ENCODE measurements at regions of chr3 and their contacts with region 1.

Region 1: DNA sequence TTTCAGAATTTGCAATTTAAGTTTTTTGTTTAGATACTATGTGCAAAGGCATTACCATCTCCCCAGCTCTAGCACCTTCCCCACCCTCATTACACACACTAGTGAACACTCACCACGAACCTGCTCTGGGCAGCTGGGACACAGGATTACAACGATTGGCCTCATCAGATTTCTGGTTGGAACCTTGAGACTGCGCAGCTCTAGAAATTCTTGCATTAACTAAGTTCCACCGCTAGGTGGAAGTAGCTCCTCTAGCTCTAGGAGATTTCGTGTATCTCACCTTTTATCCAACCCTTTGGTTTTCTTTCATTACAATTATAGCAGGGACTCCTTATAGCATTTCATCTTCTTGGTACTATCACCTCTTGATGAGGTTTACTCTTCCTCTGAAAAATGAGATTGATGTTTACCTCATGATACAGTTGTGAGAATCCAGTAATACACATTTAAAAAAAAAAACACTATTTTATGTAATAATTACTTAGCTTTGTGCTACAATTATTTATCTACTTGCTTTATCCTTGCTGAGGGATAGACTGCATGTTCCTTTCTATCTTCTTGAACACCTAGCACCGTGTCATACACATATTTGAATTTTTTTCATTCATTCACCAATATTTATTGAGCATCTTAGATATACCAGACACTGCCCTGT is 28.7 kb upstream of the PLOD2 start:
- DNase-seq: peak; percentile 47
- ATAC-seq: peak; percentile 93
- H3K4me3 ChIP-seq: no peak overlapping the region
- H3K27ac ChIP-seq: no peak overlapping the region
- H3K4me1 ChIP-seq: peaks cover 0 to 6% of the 10 kb centered on the region in 2 experiments; a peak in 2 of 4 replicates
- H3K27me3 ChIP-seq: no peaks in the 10 kb centered on the region
- CTCF ChIP-seq: peak; percentile 62 to 73 (median 65); a peak in 5 of 6 replicates
- POLR2A ChIP-seq: no peak
- RAD21 ChIP-seq: peak; percentile 78

Region 2: DNA sequence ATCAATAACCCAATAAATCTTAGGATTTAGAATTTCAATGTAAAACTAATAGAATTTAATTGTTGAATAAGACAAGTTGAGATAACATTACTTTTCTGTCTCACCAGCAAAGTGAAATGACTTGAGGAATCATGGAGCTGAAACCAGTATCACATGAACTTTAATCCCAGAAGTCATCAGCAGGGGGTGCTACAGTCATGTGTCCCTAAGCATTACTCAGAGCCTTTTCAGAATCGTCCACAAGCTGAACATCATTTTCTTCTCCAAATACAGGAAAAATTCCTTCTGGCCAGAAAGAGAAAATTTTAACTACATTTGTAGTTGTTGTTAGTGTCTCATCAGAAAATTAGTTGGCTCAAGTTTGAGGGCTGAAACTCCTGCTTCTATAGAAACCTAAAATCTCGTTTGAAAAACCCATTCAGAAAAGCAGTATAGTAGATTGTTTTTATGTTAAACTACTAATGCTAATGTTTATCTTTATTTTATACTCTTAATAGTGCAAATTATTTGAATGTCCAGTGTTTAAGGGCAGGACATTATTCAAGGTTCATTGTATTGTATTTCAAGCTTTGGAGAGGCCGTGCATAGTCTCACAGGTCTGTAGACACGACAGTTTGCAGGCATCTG is 412.8 kb before region 1 on chr3:
- CTCF ChIA-PET with region 1: interaction called, 31 read pairs
- POLR2A ChIA-PET with region 1: no interaction called
- RAD21 ChIA-PET with region 1: interaction called in 1 of 2 experiments, 3 read pairs
- intact Hi-C with region 1: loop called (anchors 1 kb)
- DNase-seq: peak; percentile 39
- ATAC-seq: peak; percentile 69; the same call in 1 of the 2 replicates
- H3K4me3 ChIP-seq: no peak overlapping the region
- H3K27ac ChIP-seq: no peak overlapping the region
- H3K4me1 ChIP-seq: no peaks in the 10 kb centered on the region
- H3K27me3 ChIP-seq: no peaks in the 10 kb centered on the region
- CTCF ChIP-seq: peak; percentile 52 to 72 (median 60); a peak in 5 of 6 replicates
- POLR2A ChIP-seq: no peak
- RAD21 ChIP-seq: peak; percentile 71

Region 3: GRCh38 chr3:145959457-145960088 is 230.1 kb before region 1 on chr3:
- CTCF ChIA-PET with region 1: no interaction called
- POLR2A ChIA-PET with region 1: no interaction called
- RAD21 ChIA-PET with region 1: no interaction called
- intact Hi-C with region 1: no loop called
- DNase-seq: no peak
- ATAC-seq: no peak
- H3K4me3 ChIP-seq: no peak overlapping the region
- H3K27ac ChIP-seq: no peak overlapping the region
- H3K4me1 ChIP-seq: no peaks in the 10 kb centered on the region
- H3K27me3 ChIP-seq: no peaks in the 10 kb centered on the region
- CTCF ChIP-seq: no peak
- POLR2A ChIP-seq: no peak
- RAD21 ChIP-seq: no peak

Region 4: DNA sequence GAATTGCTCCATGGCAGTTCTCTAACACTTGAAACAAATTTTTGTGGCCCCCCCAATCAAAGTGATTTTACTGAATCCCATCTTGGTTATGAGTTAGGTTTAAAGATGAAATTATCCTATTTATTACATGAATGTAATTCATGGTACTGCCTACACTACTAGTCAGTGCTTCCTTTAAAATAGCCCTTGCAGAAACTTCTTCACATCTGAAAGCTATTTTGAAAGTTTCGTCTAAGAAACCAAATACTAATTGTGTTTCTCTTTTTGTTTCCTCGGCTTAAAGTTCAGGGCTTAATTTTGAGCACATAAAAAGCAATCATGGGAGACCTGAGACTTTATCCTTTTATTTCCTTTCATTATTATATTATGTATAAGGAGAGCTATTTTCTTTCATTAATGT is 100.8 kb before region 1 on chr3:
- CTCF ChIA-PET with region 1: no interaction called
- POLR2A ChIA-PET with region 1: no interaction called
- RAD21 ChIA-PET with region 1: no interaction called
- intact Hi-C with region 1: no loop called
- DNase-seq: no peak
- ATAC-seq: no peak
- H3K4me3 ChIP-seq: no peak overlapping the region
- H3K27ac ChIP-seq: no peak overlapping the region
- H3K4me1 ChIP-seq: no peaks in the 10 kb centered on the region
- H3K27me3 ChIP-seq: no peaks in the 10 kb centered on the region
- CTCF ChIP-seq: no peak
- POLR2A ChIP-seq: no peak
- RAD21 ChIP-seq: no peak

Region 5: DNA sequence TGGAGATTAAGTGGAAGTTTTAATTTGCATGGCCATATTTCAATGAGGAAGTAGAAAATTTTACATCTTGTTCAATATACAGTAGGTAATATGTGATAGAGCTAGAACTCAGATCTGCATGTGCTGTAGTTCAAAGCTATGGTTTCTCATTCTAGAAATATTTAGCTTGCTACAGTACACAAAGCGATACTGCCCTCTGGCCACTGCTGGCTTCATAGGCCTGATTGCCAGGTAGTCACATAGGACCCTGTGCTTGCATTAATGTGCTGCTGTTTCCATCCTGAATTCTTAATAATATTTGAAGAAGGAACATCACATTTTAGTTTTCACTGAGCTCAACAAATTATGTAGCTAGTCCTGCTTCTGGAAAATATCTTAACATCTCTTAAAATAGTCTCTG is 192.7 kb after region 1 on chr3:
- CTCF ChIA-PET with region 1: interaction called, 13 read pairs
- POLR2A ChIA-PET with region 1: no interaction called
- RAD21 ChIA-PET with region 1: interaction called in 1 of 2 experiments, 5 read pairs
- intact Hi-C with region 1: no loop called
- DNase-seq: peak; percentile 19
- ATAC-seq: peak; percentile 78
- H3K4me3 ChIP-seq: no peak overlapping the region
- H3K27ac ChIP-seq: no peak overlapping the region
- H3K4me1 ChIP-seq: no peaks in the 10 kb centered on the region
- H3K27me3 ChIP-seq: no peaks in the 10 kb centered on the region
- CTCF ChIP-seq: peak; percentile 32 to 49 (median 41); a peak in 5 of 6 replicates
- POLR2A ChIP-seq: no peak
- RAD21 ChIP-seq: peak; percentile 73

Region 6: GRCh38 chr3:146991907-146992306 is 802.3 kb after region 1 on chr3:
- CTCF ChIA-PET with region 1: no interaction called
- POLR2A ChIA-PET with region 1: no interaction called
- RAD21 ChIA-PET with region 1: no interaction called
- intact Hi-C with region 1: no loop called
- DNase-seq: no peak
- ATAC-seq: no peak
- H3K4me3 ChIP-seq: no peak overlapping the region
- H3K27ac ChIP-seq: no peak overlapping the region
- H3K4me1 ChIP-seq: no peaks in the 10 kb centered on the region
- H3K27me3 ChIP-seq: no peaks in the 10 kb centered on the region
- CTCF ChIP-seq: no peak
- POLR2A ChIP-seq: no peak
- RAD21 ChIP-seq: no peak

Measured in HCT116 (cell line).